ENCODE measurements at regions of chr19 and their contacts with region 1.

Region 1: DNA sequence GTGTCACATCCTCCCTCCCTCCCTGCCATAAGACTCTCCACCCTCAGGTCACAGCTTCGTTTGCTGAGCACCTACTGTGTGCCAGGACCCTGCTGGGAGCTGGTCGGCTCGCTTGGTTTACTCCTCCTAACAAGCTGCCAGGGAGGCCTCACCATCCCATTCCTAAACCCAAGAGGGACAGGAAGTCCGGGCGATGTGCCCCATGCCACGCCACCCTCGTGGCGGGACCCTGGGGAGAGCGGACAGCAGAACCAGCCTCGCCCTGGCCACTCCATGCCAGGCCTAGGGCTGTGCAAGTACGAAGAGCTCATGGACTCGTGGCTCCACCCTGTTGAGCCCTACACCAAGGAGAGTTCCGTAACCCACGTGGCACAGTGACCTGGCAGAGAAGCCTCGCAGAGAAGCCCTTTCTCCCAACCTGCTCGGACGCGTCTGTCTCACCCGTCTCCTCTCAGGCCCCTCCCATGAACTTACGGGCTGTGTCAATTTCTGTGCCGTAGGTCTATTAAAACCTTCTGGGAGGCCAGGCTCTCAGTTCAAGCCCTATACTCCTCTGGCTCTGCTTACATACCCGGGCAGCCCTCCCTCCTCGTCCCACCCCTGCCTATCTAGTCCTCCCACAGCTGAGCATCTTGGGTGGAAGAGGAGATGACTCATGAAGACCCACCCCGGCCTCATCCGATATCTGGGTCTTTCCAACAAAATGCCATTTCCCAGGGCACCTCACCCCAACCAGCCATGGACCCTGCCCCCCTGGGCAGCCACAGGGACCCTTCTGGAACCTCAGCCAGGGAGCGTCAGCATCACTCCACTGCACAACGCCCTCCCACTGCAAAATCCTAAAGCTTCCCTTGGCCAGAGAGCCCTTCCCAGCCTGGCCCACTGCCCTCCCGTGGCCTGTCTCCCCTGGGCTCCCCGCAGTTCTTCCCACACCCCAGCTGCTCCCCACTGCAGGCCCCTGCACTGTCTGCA is 2.6 kb downstream of the UBXN6 start:
- DNase-seq: peak in 4 of 5 donors; percentile 70 to 78 (median 74)
- H3K4me3 ChIP-seq: peak overlapping the region; percentile 17
- H3K27ac ChIP-seq: peak overlapping the region; percentile 81 to 88
- H3K4me1 ChIP-seq: peaks cover 17% of the 10 kb centered on the region
- H3K27me3 ChIP-seq: no peaks in the 10 kb centered on the region
- CTCF ChIP-seq: no peak
- EP300 ChIP-seq: no peak
- POLR2A ChIP-seq: no peak

Region 2: GRCh38 chr19:3415695-3416094 is 1039.3 kb before region 1 on chr19:
- intact Hi-C with region 1: loop called in 1 of 4 experiments (anchors 5 kb)
- DNase-seq: no peak
- H3K4me3 ChIP-seq: no peak overlapping the region
- H3K27ac ChIP-seq: no peak overlapping the region
- H3K4me1 ChIP-seq: no peaks in the 10 kb centered on the region
- H3K27me3 ChIP-seq: no peaks in the 10 kb centered on the region
- CTCF ChIP-seq: no peak
- EP300 ChIP-seq: no peak
- POLR2A ChIP-seq: no peak

Region 3: DNA sequence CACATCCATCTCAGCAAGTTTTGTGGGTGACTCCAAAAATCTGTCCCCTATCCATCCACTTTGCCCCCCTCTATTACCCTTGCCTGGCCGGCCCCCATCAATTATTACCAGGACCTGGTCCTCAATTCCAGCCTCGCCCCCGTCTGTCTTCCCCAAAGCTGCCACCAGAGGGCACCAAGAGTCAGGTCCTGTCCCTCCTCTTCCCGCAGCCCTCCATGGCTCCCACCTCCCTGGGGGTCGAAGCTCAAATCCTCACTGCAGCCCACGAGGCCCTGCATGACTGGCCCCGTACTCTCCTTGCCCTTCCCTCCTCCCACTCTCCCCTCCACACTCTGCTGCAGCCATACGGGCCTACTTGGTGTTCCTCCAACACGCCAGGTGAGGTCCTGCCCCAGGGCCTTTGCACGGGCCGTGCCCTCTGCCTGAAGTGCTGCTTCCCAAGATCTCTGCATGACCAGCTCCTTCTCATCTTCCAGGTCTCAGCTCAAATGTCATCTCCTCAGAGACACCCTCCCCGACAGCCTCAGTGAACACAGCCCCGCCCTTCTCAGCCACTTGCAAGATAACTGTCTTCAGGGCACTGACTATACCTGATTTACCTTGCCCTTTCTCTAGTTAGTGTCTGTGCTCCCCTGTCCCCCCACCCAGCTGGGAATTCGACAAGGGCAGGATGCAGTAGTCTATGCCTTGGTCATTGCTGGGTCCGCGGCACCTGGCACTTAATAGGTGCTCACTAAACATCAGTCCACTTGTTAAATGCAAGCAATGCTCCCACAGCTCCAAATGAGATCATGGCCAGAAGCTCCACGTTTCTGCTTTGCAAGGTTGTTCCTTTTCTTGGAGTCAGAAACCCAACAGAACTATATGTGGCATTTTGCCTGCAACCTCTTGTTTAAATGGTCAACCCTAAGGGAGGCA is 121.2 kb after region 1 on chr19:
- intact Hi-C with region 1: no loop called
- DNase-seq: peak; percentile 30 to 74 (median 57)
- H3K4me3 ChIP-seq: no peak overlapping the region
- H3K27ac ChIP-seq: no peak overlapping the region
- H3K4me1 ChIP-seq: peaks cover 5% of the 10 kb centered on the region
- H3K27me3 ChIP-seq: no peaks in the 10 kb centered on the region
- CTCF ChIP-seq: peak in 2 of 3 donors; percentile 38 to 42
- EP300 ChIP-seq: no peak
- POLR2A ChIP-seq: no peak

Region 4: DNA sequence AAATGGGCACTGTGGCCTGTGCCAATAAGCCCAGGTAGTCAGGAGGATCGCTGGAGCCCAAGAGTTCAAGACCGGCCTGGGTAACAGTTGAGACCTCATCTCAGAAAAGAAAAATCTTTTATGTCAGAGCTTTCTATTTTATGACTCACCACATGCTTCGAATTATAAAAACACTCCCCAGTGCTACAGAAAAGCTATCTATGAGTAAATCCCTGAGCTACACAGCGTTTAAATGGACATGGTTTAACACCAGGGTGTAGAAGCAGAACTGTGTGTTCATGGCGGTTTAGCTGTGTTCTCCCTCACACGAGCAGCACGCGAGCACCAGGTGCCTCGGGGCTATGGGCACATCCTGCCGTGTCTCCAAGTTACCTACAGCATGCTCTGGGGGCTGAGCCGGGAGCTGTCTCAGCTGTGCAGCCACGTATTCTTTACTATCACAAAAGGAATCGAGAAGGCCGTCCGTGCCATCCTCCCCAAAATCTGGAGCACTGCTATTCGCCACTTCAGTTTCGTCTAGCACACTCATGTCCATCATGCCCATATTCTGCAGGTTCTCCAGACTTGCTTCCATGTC is 1160.8 kb after region 1 on chr19:
- intact Hi-C with region 1: no loop called
- DNase-seq: peak in 1 of 5 donors; percentile 20
- H3K4me3 ChIP-seq: no peak overlapping the region
- H3K27ac ChIP-seq: no peak overlapping the region
- H3K4me1 ChIP-seq: peaks cover 8% of the 10 kb centered on the region
- H3K27me3 ChIP-seq: no peaks in the 10 kb centered on the region
- CTCF ChIP-seq: no peak
- EP300 ChIP-seq: no peak
- POLR2A ChIP-seq: no peak